Right ventricle myocardium inferior (tissue), 1 donor: ENCODE measurements at regions of chr13 and their contacts with region 1.

Region 1: DNA sequence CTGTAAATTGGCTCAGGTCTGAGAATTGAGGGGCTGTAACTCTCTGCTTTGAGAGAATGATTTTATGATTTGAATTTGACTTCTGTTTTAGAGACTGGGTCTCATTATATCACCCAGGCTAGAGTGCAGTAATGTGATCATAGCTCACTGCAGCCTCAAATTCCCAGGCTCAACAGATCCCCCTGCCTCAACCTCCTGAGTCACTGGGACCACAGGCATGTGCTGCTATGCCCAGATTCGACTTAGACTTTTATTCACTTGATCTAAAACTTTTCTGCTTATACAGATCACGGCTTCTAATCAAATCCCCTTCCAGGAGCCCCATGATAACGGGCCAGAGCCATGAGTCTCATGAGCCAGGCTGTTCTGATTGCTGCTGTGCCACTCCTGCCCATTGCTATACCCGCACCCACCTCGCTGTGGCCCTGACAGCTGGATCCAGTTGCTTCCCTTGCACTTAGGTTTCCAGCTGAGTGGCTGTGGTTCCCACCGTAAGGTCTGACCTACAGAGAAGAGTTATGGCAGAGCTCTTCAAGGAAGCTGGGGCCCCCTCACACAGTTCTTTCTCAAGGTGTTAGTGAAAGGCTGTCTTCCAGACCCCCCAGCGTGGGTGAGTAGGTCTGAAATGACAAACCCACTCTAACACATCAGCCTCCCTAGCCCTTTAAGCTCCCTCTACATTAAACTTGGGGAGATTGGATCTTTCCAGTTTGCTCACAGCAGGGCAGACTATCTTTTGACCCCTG is 251.2 kb upstream of the SGCG start:
- DNase-seq: no peak
- ATAC-seq: no peak

Region 2: GRCh38 chr13:23105051-23105450 is 175.5 kb after region 1 on chr13:
- intact Hi-C with region 1: no loop called
- DNase-seq: no peak
- ATAC-seq: no peak

Region 3: GRCh38 chr13:24355103-24355502 is 1425.5 kb after region 1 on chr13:
- intact Hi-C with region 1: loop called (anchors 10 kb)
- DNase-seq: no peak
- ATAC-seq: no peak